Mammary epithelial cell (primary cell): ENCODE measurements at regions of chr20 and their contacts with region 1.

Region 1: DNA sequence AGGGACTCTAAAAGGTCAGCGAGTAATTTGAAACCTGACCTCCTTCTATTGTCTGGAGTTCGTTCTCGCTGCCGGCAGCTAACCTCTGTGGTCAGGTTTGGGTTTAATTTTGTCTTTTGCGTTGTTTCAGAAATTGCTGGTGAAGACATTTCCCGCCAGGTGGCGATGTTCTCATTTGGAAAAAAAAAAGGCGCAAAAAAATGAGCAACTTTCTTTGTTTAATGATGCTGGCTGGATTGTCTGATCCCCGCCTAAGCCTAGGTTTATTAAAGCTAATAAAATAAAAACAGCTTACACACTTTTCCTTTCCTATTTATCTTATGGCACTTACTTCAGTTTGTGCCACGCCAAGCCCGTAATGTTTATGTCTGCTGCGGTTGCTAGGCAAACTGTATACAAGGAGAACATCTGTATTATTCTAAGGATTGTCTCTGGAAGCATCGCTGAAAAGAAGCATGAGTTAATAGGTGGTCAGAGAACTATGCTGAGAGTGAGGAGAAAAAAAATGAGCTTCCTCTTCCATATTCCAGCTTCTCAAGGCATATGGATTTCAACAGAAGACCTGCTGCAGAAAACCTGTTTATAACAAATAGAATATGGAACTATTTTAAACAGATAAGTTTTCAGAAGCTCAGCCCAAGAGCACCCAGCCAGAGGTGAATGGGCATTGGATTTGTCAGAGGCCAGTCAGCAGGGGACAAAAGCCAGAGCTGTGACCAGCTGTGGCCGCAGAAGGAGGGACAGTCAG is 205.7 kb downstream of the DOK5 start:
- DNase-seq: peak; percentile 10
- H3K4me3 ChIP-seq: no peak overlapping the region
- H3K27ac ChIP-seq: no peak overlapping the region
- H3K4me1 ChIP-seq: no peaks in the 10 kb centered on the region
- H3K27me3 ChIP-seq: peaks cover 3% of the 10 kb centered on the region
- CTCF ChIP-seq: peak; percentile 47 to 71

Region 2: GRCh38 chr20:54525916-54526590 is 155.0 kb before region 1 on chr20:
- CTCF ChIA-PET with region 1: no interaction called
- dilution Hi-C with region 1: no loop called
- in situ Hi-C with region 1: no loop called
- intact Hi-C with region 1: no loop called
- DNase-seq: no peak
- H3K4me3 ChIP-seq: no peak overlapping the region
- H3K27ac ChIP-seq: no peak overlapping the region
- H3K4me1 ChIP-seq: no peaks in the 10 kb centered on the region
- H3K27me3 ChIP-seq: no peaks in the 10 kb centered on the region
- CTCF ChIP-seq: no peak

Region 3: GRCh38 chr20:54746767-54747166 is 65.7 kb after region 1 on chr20:
- CTCF ChIA-PET with region 1: no interaction called
- dilution Hi-C with region 1: no loop called
- in situ Hi-C with region 1: no loop called
- intact Hi-C with region 1: no loop called
- DNase-seq: no peak
- H3K4me3 ChIP-seq: no peak overlapping the region
- H3K27ac ChIP-seq: no peak overlapping the region
- H3K4me1 ChIP-seq: no peaks in the 10 kb centered on the region
- H3K27me3 ChIP-seq: no peaks in the 10 kb centered on the region
- CTCF ChIP-seq: no peak

Region 4: DNA sequence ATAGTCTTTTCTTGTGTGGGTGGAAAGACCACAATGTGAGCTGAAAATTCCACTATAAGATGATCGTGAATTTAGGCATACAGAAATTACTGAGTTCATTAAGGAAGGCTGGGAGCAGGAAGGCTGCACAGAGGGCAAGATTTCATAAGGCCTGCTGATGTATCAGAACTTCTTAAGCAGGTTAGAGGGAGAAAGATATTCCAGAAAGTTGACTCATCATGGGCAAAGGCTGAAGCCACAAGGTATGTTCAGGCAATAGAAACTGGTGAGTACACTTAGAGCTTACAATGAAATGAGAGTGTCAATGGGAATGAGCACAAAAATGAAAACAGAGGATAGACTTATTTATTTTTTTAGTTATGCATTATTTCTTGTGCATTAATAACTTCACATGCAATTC is 705.6 kb after region 1 on chr20:
- CTCF ChIA-PET with region 1: no interaction called
- dilution Hi-C with region 1: no loop called
- in situ Hi-C with region 1: loop called in 1 of 2 experiments (anchors 25 kb)
- intact Hi-C with region 1: no loop called
- DNase-seq: peak; percentile 86
- H3K4me3 ChIP-seq: no peak overlapping the region
- H3K27ac ChIP-seq: no peak overlapping the region
- H3K4me1 ChIP-seq: peaks cover 4% of the 10 kb centered on the region
- H3K27me3 ChIP-seq: no peaks in the 10 kb centered on the region
- CTCF ChIP-seq: no peak

Region 5: GRCh38 chr20:55394592-55394991 is 713.5 kb after region 1 on chr20:
- CTCF ChIA-PET with region 1: no interaction called
- dilution Hi-C with region 1: no loop called
- in situ Hi-C with region 1: loop called in 1 of 2 experiments (anchors 25 kb)
- intact Hi-C with region 1: loop called (anchors 2 kb)
- DNase-seq: peak; percentile 70
- H3K4me3 ChIP-seq: no peak overlapping the region
- H3K27ac ChIP-seq: no peak overlapping the region
- H3K4me1 ChIP-seq: no peaks in the 10 kb centered on the region
- H3K27me3 ChIP-seq: no peaks in the 10 kb centered on the region
- CTCF ChIP-seq: no peak

Region 6: GRCh38 chr20:56171087-56172012 is 1490.3 kb after region 1 on chr20:
- CTCF ChIA-PET with region 1: no interaction called
- dilution Hi-C with region 1: no loop called
- in situ Hi-C with region 1: loop called (anchors 10 to 25 kb)
- intact Hi-C with region 1: loop called (anchors 1 kb)
- DNase-seq: peak; percentile 9
- H3K4me3 ChIP-seq: no peak overlapping the region
- H3K27ac ChIP-seq: no peak overlapping the region
- H3K4me1 ChIP-seq: no peaks in the 10 kb centered on the region
- H3K27me3 ChIP-seq: no peaks in the 10 kb centered on the region
- CTCF ChIP-seq: peak; percentile 48 to 75

Region 7: GRCh38 chr20:56181583-56181982 is 1500.5 kb after region 1 on chr20:
- CTCF ChIA-PET with region 1: no interaction called
- dilution Hi-C with region 1: no loop called
- in situ Hi-C with region 1: loop called in 1 of 2 experiments (anchors 10 kb)
- intact Hi-C with region 1: loop called (anchors 2 kb)
- DNase-seq: no peak
- H3K4me3 ChIP-seq: no peak overlapping the region
- H3K27ac ChIP-seq: no peak overlapping the region
- H3K4me1 ChIP-seq: no peaks in the 10 kb centered on the region
- H3K27me3 ChIP-seq: no peaks in the 10 kb centered on the region
- CTCF ChIP-seq: peak; percentile 25 to 57